Ascending aorta (tissue), 2 donors: ENCODE measurements at regions of chr19 and their contacts with region 1.

Region 1: GRCh38 chr19:21328885-21329605 is at the start of gene ZNF708:
- DNase-seq: peak; percentile 78 to 95
- H3K4me3 ChIP-seq: peak within 1 kb of the TSS; percentile 78 to 88
- H3K27ac ChIP-seq: peak within 1 kb of the TSS; percentile 93 to 98
- H3K4me1 ChIP-seq: peaks cover 0 to 3% of the 10 kb centered on the region in 2 donors
- H3K27me3 ChIP-seq: no peaks in the 10 kb centered on the region
- CTCF ChIP-seq: no peak
- total RNA-seq, gene ZNF708: 11.0 TPM

Region 2: DNA sequence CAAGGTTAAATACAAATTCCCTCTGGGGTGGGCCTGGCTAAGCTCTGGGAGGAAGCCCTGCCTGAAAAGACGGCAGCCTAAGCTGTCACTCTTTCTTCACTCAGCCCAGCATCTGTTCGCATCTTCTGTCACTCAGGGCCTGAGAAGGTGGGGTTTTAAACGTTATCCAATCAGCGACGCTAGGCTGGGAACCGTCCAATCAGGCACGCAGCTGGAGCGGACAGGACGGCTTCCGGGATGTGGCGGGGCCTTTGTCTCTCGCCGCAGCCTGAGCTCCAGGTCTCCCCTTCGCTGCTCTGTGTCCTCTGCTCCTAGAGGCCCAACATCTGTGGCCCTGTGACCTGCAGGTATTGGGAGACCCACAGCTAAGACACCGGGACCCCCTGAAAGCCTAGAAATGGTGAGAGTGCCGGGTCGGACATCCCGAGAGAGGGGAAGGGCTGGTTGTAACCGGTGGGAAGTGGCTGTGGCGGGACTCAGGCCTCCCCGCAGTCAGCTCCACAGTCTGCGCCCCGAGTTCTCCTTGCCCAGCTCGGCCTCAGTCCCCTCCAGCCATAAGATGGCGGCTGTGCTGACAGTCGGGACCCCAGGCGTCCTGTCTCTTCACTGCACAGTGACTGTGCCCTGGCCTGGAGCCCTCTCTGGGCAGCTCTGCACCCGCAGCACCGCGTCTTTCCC is 187.1 kb before region 1 on chr19 and contains the start of gene ZNF431:
- intact Hi-C with region 1: loop called (anchors 10 kb)
- DNase-seq: peak; percentile 78 to 95
- H3K4me3 ChIP-seq: peak within 1 kb of the TSS; percentile 74 to 82
- H3K27ac ChIP-seq: peak within 1 kb of the TSS; percentile 68 to 70
- H3K4me1 ChIP-seq: peaks cover 0 to 5% of the 10 kb centered on the region in 2 donors
- H3K27me3 ChIP-seq: no peaks in the 10 kb centered on the region
- CTCF ChIP-seq: no peak
- total RNA-seq, gene ZNF431: 10.2 TPM

Region 3: DNA sequence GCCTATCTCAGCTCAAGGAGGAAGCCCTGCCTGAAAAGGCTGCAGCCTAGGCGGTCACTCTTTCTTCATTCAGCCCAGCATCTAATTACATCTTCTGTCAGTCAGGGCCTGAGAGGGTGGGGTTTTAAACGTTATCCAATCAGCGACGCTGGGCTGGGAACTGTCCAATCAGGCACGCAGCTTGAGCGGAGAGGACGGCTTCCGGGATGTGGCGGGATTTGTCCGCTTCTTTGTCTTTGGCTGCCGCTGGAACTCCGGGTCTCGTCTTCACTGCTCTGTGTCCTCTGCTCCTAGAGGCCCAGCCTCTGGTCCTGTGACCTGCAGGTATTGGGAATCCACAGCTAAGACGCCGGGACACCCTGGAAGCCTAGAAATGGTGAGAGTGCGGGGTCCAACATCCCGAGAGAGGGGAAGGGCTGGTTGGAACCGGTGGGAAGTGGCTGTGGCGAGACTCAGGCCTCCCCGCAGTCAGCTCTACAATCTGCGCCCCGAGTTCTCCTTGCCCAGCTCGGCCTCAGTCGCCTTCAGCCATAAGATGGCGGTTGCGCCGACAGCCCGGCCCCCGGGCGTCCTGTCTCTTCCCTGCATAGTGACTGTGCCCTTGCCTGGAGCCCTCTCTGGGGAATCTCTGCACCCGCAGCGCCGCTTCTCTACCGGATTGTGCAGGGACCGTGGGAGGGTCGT is 29.9 kb after region 1 on chr19 and contains the start of gene ZNF738:
- intact Hi-C with region 1: loop called (anchors 2 kb)
- DNase-seq: peak; percentile 79 to 95
- H3K4me3 ChIP-seq: peak within 1 kb of the TSS; percentile 66 to 85
- H3K27ac ChIP-seq: peak within 1 kb of the TSS; percentile 64 to 76
- H3K4me1 ChIP-seq: no peaks in the 10 kb centered on the region
- H3K27me3 ChIP-seq: no peaks in the 10 kb centered on the region
- CTCF ChIP-seq: no peak
- total RNA-seq, gene ZNF738: 1.5 TPM